ENCODE measurements at regions of chr9 and their contacts with region 1.

Region 1: DNA sequence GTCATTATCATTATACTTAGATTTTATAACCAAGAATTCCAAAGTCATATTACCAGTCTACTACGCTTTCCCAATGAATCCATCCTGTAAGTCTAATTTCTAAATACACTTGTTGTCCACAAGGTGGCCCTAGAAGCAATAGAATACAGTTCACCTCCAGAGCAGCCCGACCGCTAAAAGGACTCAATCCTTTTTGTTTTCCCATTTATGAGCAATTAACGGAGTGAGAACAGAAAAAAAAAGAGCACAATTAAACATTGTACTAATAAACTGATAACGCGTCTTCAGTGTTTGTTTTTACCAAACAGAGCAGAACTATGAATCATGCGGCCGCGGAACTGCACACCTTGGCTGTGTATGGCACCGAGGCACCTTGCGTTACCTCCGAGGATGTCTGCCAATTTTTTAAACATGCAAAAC is 160.7 kb upstream of the DAPK1 start:
- DNase-seq: no peak
- H3K4me3 ChIP-seq: peak overlapping the region; percentile 8 to 55 (median 30)
- H3K27ac ChIP-seq: no peak overlapping the region
- H3K4me1 ChIP-seq: no peaks in the 10 kb centered on the region
- H3K27me3 ChIP-seq: peaks cover 0 to 3% of the 10 kb centered on the region in 2 donors
- CTCF ChIP-seq: peak; percentile 55 to 83 (median 74)
- POLR2A ChIP-seq: no peak

Region 2: DNA sequence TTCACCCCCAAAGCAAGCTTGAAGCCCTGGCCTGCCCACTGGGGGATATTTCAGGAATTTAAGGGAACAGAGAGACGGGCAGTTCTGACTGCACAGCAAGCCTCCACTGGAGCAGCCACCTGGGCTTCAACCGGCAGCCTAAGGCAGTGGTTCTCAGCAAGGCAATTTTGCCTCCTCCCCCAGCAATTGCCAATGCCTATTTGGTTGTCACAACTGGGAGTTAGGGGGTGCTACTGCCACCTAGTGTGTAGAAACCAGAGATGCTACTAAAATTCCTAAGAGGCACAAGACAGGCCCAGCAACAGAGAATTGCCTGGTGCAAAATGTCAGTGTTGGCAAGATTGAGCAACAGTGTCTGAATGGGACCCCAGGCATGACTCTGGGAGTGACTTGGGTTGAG is 330.3 kb after region 1 on chr9:
- intact Hi-C with region 1: loop called (anchors 5 kb)
- DNase-seq: no peak
- H3K4me3 ChIP-seq: no peak overlapping the region
- H3K27ac ChIP-seq: no peak overlapping the region
- H3K4me1 ChIP-seq: no peaks in the 10 kb centered on the region
- H3K27me3 ChIP-seq: peaks cover 0 to 21% of the 10 kb centered on the region in 2 donors
- CTCF ChIP-seq: no peak
- POLR2A ChIP-seq: no peak